ENCODE measurements at regions of chr3 and their contacts with region 1.

Region 1: GRCh38 chr3:126357295-126358037 is at the start of gene KLF15:
- DNase-seq: peak; percentile 83 to 99 (median 89)

Region 2: GRCh38 chr3:124862006-124862405 is 1495.5 kb before region 1 on chr3:
- intact Hi-C with region 1: no loop called
- DNase-seq: no peak

Region 3: DNA sequence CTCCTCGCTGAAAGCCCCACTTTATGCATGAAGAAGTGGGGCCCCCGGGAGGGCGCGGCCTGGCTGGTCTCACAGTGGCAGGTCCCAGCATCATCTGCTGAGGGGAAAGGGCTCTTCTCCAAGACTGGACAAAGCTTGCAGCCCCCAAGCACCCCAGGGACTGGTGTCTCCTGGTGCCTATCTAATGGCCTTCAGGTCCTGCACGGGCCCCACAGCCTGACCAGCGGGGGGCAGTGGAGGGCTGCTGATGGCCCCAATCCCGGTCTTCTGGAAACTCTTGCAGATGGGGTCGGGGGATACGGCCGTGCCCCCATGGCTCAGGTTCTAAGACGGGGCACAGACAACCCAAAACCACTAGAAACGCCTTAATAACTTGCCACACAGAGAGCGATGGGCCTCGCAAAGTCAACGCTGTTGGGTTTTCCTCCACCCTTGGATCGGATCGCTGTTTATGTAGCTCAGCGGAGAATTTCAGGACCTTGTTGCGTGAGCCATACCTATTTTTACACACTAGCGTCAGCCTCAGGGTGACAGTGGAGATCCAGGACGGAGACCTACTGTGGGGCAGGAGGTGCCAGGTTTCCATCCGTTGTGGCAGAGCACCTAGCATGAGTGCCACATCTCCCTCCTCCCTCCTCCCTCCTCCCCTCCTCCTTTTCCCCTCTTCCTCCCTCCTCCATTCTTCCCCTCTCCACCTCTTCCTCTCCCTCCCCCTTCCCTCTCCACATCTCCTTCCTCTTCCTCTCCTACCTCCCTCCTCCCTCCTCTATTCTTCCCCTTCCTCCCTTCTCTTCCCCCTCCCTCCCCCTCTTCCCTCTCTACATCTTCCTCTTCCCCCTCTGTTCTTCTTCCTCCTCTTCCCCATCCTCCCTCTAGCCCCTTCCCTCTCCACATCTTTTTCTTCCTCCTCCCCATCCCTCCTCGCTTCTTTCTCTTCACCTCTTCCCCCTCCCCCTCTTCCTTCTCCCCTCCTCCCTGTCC is 97.8 kb before region 1 on chr3:
- intact Hi-C with region 1: loop called (anchors 2 kb)
- DNase-seq: peak; percentile 31 to 96 (median 76)

Region 4: GRCh38 chr3:126267226-126267975 is 90.1 kb before region 1 on chr3:
- intact Hi-C with region 1: loop called (anchors 2 kb)
- DNase-seq: peak; percentile 54 to 95 (median 73)

Region 5: DNA sequence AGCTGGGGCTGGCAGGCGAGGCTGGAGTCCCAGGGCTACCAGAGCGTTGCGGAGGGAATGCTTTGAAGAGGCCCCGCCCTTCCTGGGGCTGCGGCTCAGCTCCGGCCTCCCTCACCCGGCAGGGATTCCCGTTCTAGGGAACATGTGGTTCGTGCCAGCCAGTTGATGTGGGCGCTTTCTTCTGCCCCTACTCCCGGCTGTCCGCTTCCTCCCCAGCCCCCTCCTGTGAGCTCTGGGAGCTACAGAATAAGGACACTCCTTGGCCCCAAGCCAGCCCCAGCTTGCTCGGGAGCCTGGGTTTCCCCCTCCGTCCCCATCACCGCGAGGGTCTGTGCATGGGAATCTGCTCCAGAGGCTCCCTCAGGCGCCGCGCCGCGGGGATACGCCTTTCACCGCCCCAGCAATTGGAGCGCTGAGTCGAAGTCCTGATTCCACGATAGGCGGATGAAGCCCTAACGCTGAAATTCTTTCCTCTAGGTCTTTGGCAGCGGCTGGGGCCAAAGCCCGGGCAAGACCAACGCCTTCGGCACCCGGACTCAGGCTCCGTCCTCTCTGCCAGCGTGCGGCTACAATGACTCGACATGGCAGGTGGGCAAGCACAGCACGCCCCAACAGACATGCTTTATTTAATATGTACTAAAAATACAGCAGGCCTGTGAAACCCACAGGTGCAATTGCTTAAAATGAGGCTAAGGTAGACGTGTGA is 69.8 kb before region 1 on chr3:
- intact Hi-C with region 1: loop called (anchors 5 kb)
- DNase-seq: peak; percentile 57 to 97 (median 83)

Region 6: GRCh38 chr3:126389112-126389793 is 31.8 kb after region 1 on chr3:
- intact Hi-C with region 1: loop called (anchors 2 kb)
- DNase-seq: peak; percentile 74 to 98 (median 88)

Region 7: DNA sequence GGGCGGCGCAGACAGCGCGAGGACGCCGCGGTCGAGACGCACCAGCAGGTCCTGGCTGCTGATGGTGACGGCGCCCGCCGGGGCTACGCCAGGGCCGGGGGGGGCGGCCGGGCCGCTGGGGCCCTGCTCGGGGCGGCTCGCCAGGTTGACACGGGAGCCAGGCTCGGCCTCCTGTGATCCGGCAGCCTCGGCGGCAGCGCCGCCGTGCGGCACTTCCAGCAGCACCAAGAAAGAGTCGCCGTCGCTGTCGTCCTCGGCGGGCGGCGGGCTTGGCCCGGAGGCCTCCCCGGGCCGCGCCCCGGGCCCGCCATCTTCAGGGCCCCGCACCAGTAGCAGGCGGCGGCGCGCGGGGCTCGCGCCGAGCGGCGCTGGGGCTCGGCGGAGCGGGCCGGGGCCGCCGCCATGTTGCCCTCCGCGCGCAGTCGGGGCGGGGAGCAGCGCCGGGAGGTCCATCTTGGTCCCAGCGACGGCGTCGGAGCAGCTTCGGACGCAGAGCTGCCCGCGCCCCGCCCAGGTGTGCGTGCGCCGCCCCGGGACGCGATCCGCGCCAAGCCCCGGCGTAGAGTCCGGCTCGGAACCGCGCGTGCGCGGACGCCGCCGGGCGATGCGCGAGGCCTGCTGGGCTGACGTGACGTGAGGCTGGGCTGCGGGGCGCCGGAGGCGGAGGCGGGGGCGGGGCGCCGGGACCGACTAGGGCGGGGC is 118.1 kb after region 1 on chr3 and contains the start of gene ZXDC:
- intact Hi-C with region 1: loop called (anchors 1 kb)
- DNase-seq: peak; percentile 86 to 99 (median 92)

Region 8: DNA sequence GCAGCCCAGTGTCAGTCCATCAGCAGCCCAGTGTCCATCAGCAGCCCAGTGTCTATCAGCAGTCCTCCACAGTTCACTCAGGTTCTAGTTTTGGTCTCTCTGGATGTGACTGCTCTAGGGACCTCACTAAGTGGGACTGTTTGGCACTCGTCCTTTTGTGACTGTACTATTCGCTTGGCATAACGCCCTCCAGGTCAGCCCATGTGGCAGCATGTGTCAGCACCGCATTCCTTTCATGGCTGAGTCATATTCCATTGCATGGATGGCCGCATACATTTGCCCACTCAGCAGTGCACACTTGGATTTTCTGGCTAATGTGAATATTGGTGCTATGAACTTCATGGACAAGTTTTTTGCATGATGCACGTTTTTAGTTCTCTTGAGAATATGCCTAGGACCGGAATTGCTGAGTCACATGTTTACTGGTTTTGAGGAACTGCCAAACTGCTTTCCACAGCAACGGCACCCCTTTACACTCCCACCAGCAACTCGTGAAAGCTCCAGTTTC is 182.9 kb after region 1 on chr3:
- intact Hi-C with region 1: no loop called
- DNase-seq: peak in 6 of 10 donors; percentile 1 to 25 (median 8)